ENCODE measurements at regions of chr6 and their contacts with region 1.

Region 1: GRCh38 chr6:30541515-30542403 is 14.5 kb downstream of the GNL1 start:
- DNase-seq: peak; percentile 74
- ATAC-seq: peak; percentile 90
- H3K4me3 ChIP-seq: peak overlapping the region; percentile 25 to 49
- H3K27ac ChIP-seq: no peak overlapping the region
- H3K4me1 ChIP-seq: no peaks in the 10 kb centered on the region; the same call in 1 of the 2 replicates
- H3K27me3 ChIP-seq: no peaks in the 10 kb centered on the region
- CTCF ChIP-seq: peak; percentile 98

Region 2: GRCh38 chr6:30483677-30484279 is 58.0 kb before region 1 on chr6:
- CTCF ChIA-PET with region 1: interaction called, 17 read pairs
- POLR2A ChIA-PET with region 1: no interaction called
- in situ Hi-C with region 1: no loop called
- intact Hi-C with region 1: loop called (anchors 1 kb)
- DNase-seq: no peak
- ATAC-seq: no peak
- H3K4me3 ChIP-seq: no peak overlapping the region
- H3K27ac ChIP-seq: no peak overlapping the region
- H3K4me1 ChIP-seq: peaks cover 9% of the 10 kb centered on the region
- H3K27me3 ChIP-seq: peaks cover 26% of the 10 kb centered on the region
- CTCF ChIP-seq: peak; percentile 66

Region 3: DNA sequence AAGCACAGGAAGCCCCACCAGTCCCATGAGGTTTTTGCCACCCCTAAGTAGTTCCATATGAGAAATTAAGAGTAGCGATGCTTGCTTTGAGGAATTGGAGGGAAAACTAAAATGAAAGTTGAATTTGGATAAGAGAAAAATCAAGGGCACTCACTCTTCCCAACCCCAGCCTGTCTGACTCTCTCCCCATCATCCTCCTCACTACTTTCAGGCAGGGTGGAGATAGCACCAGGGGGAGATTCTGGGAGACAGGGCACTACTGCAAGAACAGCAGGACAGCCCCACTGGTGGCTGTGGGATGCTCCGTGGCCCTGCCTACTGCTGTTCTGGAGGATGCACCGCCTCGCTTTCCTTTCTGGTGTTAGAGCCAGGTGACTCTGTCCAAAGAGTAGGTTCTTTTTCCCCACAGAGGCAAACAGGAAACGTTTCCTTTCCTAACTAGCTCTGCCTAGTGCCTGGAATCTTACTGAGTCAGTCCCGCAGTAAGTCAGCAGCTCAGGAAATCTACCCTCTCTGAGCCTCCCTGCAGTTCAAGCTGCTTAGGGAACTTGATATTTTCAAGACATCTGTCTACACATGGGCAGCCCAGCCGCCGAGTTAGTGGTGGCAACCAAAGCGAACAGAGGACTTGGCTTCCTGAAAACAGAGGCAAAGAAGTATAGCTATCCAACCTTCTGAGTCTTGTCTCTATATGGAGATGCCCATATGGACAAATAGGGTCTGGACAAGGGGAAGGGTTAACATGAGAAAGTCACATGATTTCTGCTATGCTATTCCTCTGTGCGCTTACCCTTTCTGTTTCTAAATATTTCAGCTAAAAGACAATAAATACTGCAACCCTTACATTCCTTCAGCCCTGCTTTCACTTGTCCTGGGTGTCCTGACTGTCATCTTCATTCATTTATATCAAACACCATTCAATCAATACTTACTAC is 41.1 kb before region 1 on chr6:
- CTCF ChIA-PET with region 1: no interaction called
- POLR2A ChIA-PET with region 1: no interaction called
- in situ Hi-C with region 1: loop called (anchors 5 kb)
- intact Hi-C with region 1: no loop called
- DNase-seq: no peak
- ATAC-seq: peak; percentile 80
- H3K4me3 ChIP-seq: no peak overlapping the region
- H3K27ac ChIP-seq: no peak overlapping the region
- H3K4me1 ChIP-seq: peaks cover 4% of the 10 kb centered on the region
- H3K27me3 ChIP-seq: no peaks in the 10 kb centered on the region
- CTCF ChIP-seq: no peak

Region 4: DNA sequence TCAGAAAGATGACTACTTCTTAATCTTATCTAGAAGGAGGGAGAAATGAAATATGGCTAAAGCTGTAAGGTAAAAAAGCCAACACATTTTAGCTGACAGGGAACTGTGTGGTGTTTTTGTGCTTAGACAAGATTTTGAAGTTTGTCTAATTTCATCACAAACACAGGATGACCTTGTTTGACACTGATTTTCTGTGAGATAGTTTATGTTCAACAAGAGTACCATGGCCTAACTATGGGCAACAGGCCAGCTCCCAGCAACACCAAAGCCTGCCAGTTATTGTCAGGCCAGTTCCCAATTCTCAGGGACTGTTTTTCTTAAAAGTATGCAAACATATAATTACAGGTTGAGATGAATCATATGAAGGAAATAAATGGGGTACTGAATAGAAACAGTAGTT is 24.0 kb after region 1 on chr6:
- CTCF ChIA-PET with region 1: no interaction called
- POLR2A ChIA-PET with region 1: no interaction called
- in situ Hi-C with region 1: no loop called
- intact Hi-C with region 1: no loop called
- DNase-seq: no peak
- ATAC-seq: no peak
- H3K4me3 ChIP-seq: no peak overlapping the region
- H3K27ac ChIP-seq: no peak overlapping the region
- H3K4me1 ChIP-seq: 0 out of 2 replicates have a peak, but pooled peaks cover 8% of the 10 kb centered on the region
- H3K27me3 ChIP-seq: no peaks in the 10 kb centered on the region
- CTCF ChIP-seq: no peak